ENCODE measurements at regions of chr1 and their contacts with region 1.

Region 1: DNA sequence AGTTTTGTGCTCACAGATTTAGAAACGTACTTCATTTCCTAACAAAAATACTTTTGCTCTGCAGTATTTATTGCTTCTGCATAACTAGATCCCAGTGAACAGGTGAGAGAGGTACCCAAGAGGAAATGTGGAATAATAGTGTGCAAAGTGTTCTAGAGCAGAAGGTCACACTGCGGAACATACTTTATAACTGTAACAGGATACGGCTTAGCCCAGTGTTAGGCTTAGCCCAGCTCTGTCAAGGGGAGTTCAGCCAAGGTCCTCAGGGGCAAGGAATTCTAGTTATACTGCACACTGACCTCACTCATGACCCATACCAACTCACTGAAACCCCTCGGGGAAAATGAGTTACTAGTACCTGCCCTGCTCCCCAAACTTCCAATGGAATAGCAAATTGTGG is 55.3 kb downstream of the PTPN14 start:
- DNase-seq: no peak
- ATAC-seq: peak; percentile 84
- H3K4me3 ChIP-seq: peak overlapping the region in 1 of 2 experiments; percentile 25; a peak in 2 of 4 replicates
- H3K27ac ChIP-seq: peak overlapping the region; percentile 98
- H3K4me1 ChIP-seq: peaks cover 99% of the 10 kb centered on the region
- H3K27me3 ChIP-seq: no peaks in the 10 kb centered on the region
- CTCF ChIP-seq: no peak

Region 2: DNA sequence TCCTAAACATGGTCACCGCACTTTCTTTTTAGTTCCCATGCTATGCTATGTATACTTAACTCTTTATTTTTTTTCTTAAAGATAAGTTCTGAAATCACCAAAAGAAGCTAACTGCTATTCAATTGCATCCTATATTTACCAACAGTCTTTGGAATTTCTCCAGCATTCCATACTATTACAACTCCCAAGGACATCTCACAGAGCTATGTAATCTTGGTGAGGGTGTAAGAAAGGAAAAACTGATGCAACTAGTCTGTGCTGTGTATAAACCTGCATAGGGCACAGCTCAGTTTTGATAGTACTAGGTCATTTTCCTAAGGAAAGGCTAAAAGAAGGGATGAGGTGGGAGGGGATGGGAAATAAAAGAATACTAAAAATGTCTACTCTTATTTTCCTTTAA is 22.7 kb before region 1 on chr1:
- CTCF ChIA-PET with region 1: no interaction called
- POLR2A ChIA-PET with region 1: interaction called, 10 read pairs
- in situ Hi-C with region 1: no loop called
- intact Hi-C with region 1: no loop called
- DNase-seq: no peak
- ATAC-seq: no peak
- H3K4me3 ChIP-seq: no peak overlapping the region
- H3K27ac ChIP-seq: peak overlapping the region; percentile 89
- H3K4me1 ChIP-seq: peaks cover 94% of the 10 kb centered on the region
- H3K27me3 ChIP-seq: no peaks in the 10 kb centered on the region
- CTCF ChIP-seq: no peak